Caco-2 (cell line): ENCODE measurements at regions of chr17 and their contacts with region 1.

Region 1: DNA sequence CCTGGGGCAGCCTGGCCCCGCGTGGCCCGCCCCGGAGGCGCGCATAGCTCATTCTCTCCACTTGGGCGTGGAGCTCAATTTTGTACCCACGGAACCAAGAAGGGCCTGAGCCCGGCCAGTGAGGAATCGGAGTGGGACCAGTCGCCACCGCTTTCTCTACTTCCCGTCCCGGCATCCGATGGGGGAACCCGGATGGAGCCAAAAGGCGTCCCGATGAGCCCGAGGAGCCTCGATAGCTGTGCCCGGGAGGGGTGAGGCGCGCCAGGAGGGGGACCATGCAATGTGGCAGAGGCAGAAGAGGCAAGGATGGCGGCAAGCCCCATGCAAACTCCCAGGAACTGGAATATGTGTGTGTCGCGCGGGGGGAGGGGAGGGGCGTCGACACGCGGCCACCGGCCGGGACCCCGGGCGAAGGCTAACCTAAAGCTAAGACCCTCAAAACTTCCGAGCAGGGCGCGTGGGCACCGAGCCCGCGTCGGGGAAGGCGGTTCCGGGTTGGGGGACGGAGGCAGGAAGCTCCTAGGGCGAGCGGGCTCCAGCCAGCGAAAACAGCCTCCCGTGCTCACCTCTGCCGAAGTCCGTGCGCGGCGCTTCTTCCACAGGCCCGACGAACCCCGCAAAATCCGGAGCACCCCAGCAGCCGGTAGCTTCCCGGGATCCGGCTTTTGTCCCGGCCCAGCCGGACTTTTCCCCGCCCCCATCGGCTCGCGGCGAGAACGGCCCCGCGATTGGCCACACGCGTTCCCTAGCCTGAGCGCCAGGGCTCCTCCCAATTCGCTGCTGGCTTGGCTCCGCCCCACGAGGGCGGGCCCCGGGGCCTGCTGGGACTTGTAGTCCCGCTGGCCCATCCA is at the start of gene ACLY:
- DNase-seq: peak; percentile 98 to 100
- H3K4me3 ChIP-seq: peak within 1 kb of the TSS; percentile 66
- H3K4me3 Mint-ChIP-seq: peak within 1 kb of the TSS; percentile 94
- H3K27ac Mint-ChIP-seq: peak within 1 kb of the TSS; percentile 79
- H3K4me1 ChIP-seq: peaks cover 47% of the 10 kb centered on the region
- H3K4me1 Mint-ChIP-seq: peaks cover 34% of the 10 kb centered on the region
- H3K27me3 ChIP-seq: no peaks in the 10 kb centered on the region
- H3K27me3 Mint-ChIP-seq: no peaks in the 10 kb centered on the region
- CTCF ChIP-seq: no peak
- total RNA-seq, gene ACLY: 246 and 252 TPM in 2 replicates

Region 2: DNA sequence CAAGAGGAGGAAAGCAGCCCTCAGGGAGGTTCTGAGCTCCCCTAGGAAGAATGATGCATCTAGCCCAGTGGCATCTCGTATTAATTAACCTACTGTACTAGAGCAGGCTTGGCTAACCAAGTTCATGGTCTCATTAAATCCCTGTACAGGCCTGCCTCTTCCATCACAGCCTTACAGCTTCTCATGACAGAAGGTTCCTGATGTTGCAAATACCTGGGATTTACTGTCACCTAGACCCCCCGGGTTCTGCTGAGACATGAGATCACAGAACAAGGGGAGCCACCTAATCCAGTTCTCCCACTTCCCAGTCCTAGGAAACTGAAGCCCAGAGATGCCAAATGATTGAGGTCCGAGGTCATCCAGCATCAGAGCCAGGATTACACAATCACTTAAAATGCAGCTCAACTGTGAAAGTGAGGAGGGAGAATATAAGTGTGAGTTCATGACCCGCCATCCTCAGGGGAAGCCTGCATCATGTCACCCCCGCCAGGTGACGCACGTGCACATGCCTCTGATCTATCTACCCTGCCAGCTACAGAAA is 23.7 kb before region 1 on chr17:
- CTCF ChIA-PET with region 1: interaction called, 8 read pairs
- POLR2A ChIA-PET with region 1: no interaction called
- intact Hi-C with region 1: loop called (anchors 2 kb)
- DNase-seq: peak; percentile 54 to 65
- H3K4me3 ChIP-seq: no peak overlapping the region
- H3K4me3 Mint-ChIP-seq: no peak overlapping the region
- H3K27ac Mint-ChIP-seq: peak overlapping the region; percentile 68
- H3K4me1 ChIP-seq: peaks cover 7% of the 10 kb centered on the region; the same call in 1 of the 2 replicates
- H3K4me1 Mint-ChIP-seq: peaks cover 24% of the 10 kb centered on the region
- H3K27me3 ChIP-seq: no peaks in the 10 kb centered on the region
- H3K27me3 Mint-ChIP-seq: no peaks in the 10 kb centered on the region
- CTCF ChIP-seq: no peak

Region 3: DNA sequence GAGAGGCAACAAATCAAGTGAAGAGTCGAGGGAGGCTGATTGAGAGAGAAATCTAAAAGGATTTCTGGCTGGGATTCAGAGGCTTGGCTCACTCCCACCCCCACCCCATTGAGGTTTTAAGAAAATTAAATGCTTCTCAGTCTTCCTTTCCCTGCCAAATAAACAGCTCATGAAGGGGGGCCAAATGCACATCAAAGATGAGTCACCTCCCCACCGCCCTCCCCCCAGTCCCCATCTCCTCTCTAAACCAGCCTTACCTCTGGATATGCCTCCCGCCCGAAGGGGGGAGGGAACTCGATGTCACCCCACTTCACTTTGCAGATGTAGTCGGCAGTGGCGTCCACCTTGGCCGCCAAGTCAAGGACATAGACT is 11.4 kb before region 1 on chr17:
- CTCF ChIA-PET with region 1: interaction called, 16 read pairs
- POLR2A ChIA-PET with region 1: interaction called, 11 read pairs
- intact Hi-C with region 1: no loop called
- DNase-seq: no peak
- H3K4me3 ChIP-seq: no peak overlapping the region
- H3K4me3 Mint-ChIP-seq: no peak overlapping the region
- H3K27ac Mint-ChIP-seq: no peak overlapping the region
- H3K4me1 ChIP-seq: peaks cover 30% of the 10 kb centered on the region
- H3K4me1 Mint-ChIP-seq: peaks cover 21% of the 10 kb centered on the region
- H3K27me3 ChIP-seq: no peaks in the 10 kb centered on the region
- H3K27me3 Mint-ChIP-seq: no peaks in the 10 kb centered on the region
- CTCF ChIP-seq: no peak

Region 4: GRCh38 chr17:41930009-41930832 is 11.7 kb after region 1 on chr17 and contains the start of gene ODAD4:
- CTCF ChIA-PET with region 1: interaction called, 28 read pairs
- POLR2A ChIA-PET with region 1: interaction called, 31 read pairs
- intact Hi-C with region 1: loop called (anchors 1 kb)
- DNase-seq: peak; percentile 97 to 98
- H3K4me3 ChIP-seq: peak within 1 kb of the TSS; percentile 41
- H3K4me3 Mint-ChIP-seq: peak within 1 kb of the TSS; percentile 97
- H3K27ac Mint-ChIP-seq: peak within 1 kb of the TSS; percentile 98
- H3K4me1 ChIP-seq: peaks cover 4% of the 10 kb centered on the region; the same call in 1 of the 2 replicates
- H3K4me1 Mint-ChIP-seq: peaks cover 17% of the 10 kb centered on the region
- H3K27me3 ChIP-seq: no peaks in the 10 kb centered on the region
- H3K27me3 Mint-ChIP-seq: no peaks in the 10 kb centered on the region
- CTCF ChIP-seq: peak; percentile 44 to 60
- total RNA-seq, gene ODAD4: 0.98 and 1.3 TPM in 2 replicates

Region 5: GRCh38 chr17:41966463-41967140 is 48.1 kb after region 1 on chr17 and contains the start of gene CNP:
- CTCF ChIA-PET with region 1: interaction called, 5 read pairs
- POLR2A ChIA-PET with region 1: no interaction called
- intact Hi-C with region 1: loop called (anchors 2 kb)
- DNase-seq: peak; percentile 92 to 96
- H3K4me3 ChIP-seq: peak within 1 kb of the TSS; percentile 83
- H3K4me3 Mint-ChIP-seq: peak within 1 kb of the TSS; percentile 79
- H3K27ac Mint-ChIP-seq: peak within 1 kb of the TSS; percentile 0
- H3K4me1 ChIP-seq: peaks cover 20% of the 10 kb centered on the region
- H3K4me1 Mint-ChIP-seq: peaks cover 23% of the 10 kb centered on the region
- H3K27me3 ChIP-seq: no peaks in the 10 kb centered on the region
- H3K27me3 Mint-ChIP-seq: no peaks in the 10 kb centered on the region
- CTCF ChIP-seq: no peak
- total RNA-seq, gene CNP: 90.1 and 94.5 TPM in 2 replicates